GM12878 (cell line): ENCODE measurements at regions of chr20 and their contacts with region 1.

Region 1: DNA sequence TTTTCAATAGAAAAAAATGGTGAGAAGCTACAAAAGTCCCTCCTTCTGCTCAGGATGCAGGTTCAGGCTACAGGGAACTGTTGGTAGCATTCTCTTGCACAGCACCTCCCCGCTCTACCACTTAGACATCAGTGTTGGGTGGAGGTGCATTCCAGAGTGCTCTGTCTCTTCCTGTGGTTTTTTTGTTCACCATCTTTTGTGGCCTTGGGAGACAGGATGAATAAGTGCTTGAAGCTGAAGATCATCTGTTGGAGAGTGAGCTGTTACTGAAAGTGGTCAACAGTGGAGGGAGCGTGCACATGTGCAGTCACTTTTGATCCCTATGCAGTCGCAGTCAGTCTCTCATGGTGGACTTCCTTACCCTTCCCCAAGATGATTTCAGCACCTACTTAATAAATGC is 16.6 kb upstream of the BTBD3 start:
- DNase-seq: no peak
- ATAC-seq: no peak
- H3K4me3 ChIP-seq: no peak overlapping the region
- H3K27ac ChIP-seq: no peak overlapping the region
- H3K4me1 ChIP-seq: no peaks in the 10 kb centered on the region
- H3K27me3 ChIP-seq: no peaks in the 10 kb centered on the region
- CTCF ChIP-seq: no peak
- EP300 ChIP-seq: no peak
- POLR2A ChIP-seq: no peak
- RAD21 ChIP-seq: no peak

Region 2: GRCh38 chr20:11890331-11891080 is 10.6 kb before region 1 on chr20:
- CTCF ChIA-PET with region 1: interaction called, 5 read pairs
- POLR2A ChIA-PET with region 1: no interaction called
- RAD21 ChIA-PET with region 1: no interaction called
- SMC1A ChIA-PET with region 1: no interaction called
- in situ Hi-C with region 1: no loop called
- intact Hi-C with region 1: loop called (anchors 2 kb)
- DNase-seq: peak; percentile 21
- ATAC-seq: peak; percentile 86
- H3K4me3 ChIP-seq: no peak overlapping the region
- H3K27ac ChIP-seq: no peak overlapping the region
- H3K4me1 ChIP-seq: no peaks in the 10 kb centered on the region
- H3K27me3 ChIP-seq: no peaks in the 10 kb centered on the region
- CTCF ChIP-seq: no peak
- EP300 ChIP-seq: no peak
- POLR2A ChIP-seq: no peak
- RAD21 ChIP-seq: no peak

Region 3: GRCh38 chr20:11912013-11912658 is 11.0 kb after region 1 on chr20:
- CTCF ChIA-PET with region 1: interaction called, 20 read pairs
- POLR2A ChIA-PET with region 1: no interaction called
- RAD21 ChIA-PET with region 1: interaction called, 4 read pairs
- SMC1A ChIA-PET with region 1: interaction called, 4 read pairs
- in situ Hi-C with region 1: no loop called
- intact Hi-C with region 1: no loop called
- DNase-seq: no peak
- ATAC-seq: peak; percentile 80
- H3K4me3 ChIP-seq: no peak overlapping the region
- H3K27ac ChIP-seq: no peak overlapping the region
- H3K4me1 ChIP-seq: no peaks in the 10 kb centered on the region
- H3K27me3 ChIP-seq: no peaks in the 10 kb centered on the region
- CTCF ChIP-seq: peak; percentile 38 to 50 (median 40); a peak in 4 of 6 replicates
- EP300 ChIP-seq: no peak
- POLR2A ChIP-seq: no peak
- RAD21 ChIP-seq: peak; percentile 25; the same call in 1 of the 2 replicates